GM12878 (cell line): ENCODE measurements at regions of chr7 and their contacts with region 1.

Region 1: DNA sequence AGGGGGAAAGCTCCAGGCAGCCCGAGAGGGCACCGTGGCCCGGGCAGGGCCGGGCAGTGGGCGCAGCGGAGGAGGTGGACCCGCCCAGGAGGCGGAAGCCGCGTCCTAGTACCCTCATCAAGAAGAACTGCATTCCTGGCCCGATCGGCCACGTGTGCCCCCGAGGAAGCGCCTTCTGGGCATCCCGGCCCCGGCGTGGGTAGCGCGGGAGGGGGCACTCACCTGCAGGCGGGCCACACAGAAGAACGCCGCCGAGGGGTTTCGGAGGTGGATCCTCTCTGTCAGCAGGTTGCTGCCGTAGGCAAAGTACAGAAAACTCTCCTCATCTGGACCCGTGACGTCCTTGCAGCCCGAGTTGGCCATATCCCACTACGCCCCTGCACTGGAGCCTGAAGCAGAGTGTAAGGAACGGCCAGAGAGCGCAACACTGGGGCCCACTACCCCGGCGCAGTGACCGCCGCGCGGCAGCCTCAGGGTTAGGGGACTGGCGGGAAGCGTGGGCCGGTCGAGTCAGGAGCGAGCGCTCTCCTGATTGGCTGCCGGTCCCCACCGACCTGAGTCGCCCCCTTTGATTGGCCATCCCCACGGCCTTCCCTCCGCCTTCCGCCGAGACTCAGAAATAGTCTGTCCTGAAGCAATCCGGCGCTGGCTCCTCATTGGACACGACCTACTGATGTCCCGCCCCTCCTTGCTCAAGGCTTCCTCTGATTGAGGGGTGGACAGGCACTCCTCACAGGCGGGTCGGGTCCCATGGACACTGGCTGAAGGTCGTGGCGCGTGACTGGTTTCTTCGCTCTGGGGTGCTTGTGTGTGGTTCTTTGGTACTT is at the start of gene GGCT:
- DNase-seq: peak; percentile 95
- ATAC-seq: peak; percentile 97
- H3K4me3 ChIP-seq: peak within 1 kb of the TSS; percentile 92
- H3K27ac ChIP-seq: peak within 1 kb of the TSS; percentile 82
- H3K4me1 ChIP-seq: peaks cover 6% of the 10 kb centered on the region; the same call in 1 of the 2 replicates
- H3K27me3 ChIP-seq: no peaks in the 10 kb centered on the region
- CTCF ChIP-seq: no peak
- EP300 ChIP-seq: no peak
- POLR2A ChIP-seq: peak; percentile 91
- RAD21 ChIP-seq: no peak
- polyA plus RNA-seq, gene GGCT: 168 to 215 TPM

Region 2: DNA sequence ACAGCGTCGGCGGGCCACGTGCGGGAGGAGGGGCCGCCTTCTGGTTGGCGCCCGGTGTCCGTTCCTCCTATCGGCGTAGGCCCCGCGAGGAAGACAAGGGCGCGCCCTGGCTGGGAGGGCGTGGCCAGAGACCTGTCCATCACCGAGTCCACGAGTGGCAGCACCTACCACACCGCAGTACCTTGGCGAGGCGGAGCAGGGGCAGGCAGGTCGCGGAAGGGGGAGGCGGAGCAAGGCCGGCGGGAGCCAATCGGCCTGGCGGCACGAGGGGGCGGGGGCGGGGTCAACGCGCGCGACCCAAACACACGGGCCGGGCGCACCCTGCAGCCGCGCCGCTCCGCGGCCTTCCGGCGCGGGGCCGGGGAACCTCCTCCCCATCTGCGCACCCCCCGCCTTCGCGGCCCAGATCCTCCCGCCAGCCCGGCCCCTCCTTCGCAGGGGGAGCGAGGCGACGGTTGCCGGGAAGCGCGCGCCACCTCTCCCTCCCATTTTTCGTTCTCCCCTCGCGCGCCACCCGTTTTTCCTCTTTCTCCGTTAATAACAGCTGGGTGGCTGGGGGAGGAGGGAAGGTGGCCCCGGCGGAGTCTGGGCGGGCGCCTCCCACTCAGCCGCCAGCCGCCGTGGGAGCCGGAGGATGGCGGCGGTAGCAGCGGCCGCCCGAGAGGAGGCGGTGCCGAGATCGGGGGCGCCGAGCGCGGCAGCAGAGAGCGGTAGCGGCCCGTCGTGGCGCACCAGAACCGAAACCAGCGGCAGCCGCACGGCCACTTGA is 220.1 kb before region 1 on chr7 and contains the start of gene ZNRF2:
- CTCF ChIA-PET with region 1: interaction called, 3 read pairs
- POLR2A ChIA-PET with region 1: no interaction called
- RAD21 ChIA-PET with region 1: no interaction called
- SMC1A ChIA-PET with region 1: no interaction called
- in situ Hi-C with region 1: no loop called
- intact Hi-C with region 1: loop called (anchors 2 kb)
- DNase-seq: peak; percentile 97
- ATAC-seq: peak; percentile 91
- H3K4me3 ChIP-seq: peak within 1 kb of the TSS; percentile 61; the same call in 1 of the 2 replicates
- H3K27ac ChIP-seq: peak within 1 kb of the TSS; percentile 83
- H3K4me1 ChIP-seq: peaks cover 12% of the 10 kb centered on the region
- H3K27me3 ChIP-seq: no peaks in the 10 kb centered on the region
- CTCF ChIP-seq: peak; percentile 21 to 63 (median 39); a peak in 4 of 6 replicates
- EP300 ChIP-seq: no peak
- POLR2A ChIP-seq: peak; percentile 84
- RAD21 ChIP-seq: peak; percentile 33; the same call in 1 of the 2 replicates
- polyA plus RNA-seq, gene ZNRF2: 3.1 to 4.0 TPM

Region 3: DNA sequence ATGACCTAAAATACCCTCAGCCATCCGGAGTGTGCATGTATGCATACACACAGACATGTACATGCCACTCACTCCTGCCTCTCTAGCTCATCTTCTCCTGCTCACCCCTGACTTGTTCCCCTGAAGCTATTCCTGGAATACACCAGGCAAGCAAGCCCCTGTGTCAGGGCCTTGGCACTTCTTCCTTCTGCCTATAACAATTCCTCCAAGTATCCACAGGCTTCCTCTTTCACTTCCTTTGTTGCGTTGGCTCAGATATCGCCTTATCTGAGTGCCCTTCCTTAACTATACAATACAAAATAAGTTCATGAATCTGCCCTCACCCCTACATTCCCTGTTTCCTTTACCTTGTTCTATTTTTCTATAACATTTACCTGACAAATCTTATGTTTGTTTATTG is 114.8 kb before region 1 on chr7:
- CTCF ChIA-PET with region 1: no interaction called
- POLR2A ChIA-PET with region 1: no interaction called
- RAD21 ChIA-PET with region 1: no interaction called
- SMC1A ChIA-PET with region 1: no interaction called
- in situ Hi-C with region 1: no loop called
- intact Hi-C with region 1: no loop called
- DNase-seq: no peak
- ATAC-seq: no peak
- H3K4me3 ChIP-seq: no peak overlapping the region
- H3K27ac ChIP-seq: no peak overlapping the region
- H3K4me1 ChIP-seq: no peaks in the 10 kb centered on the region
- H3K27me3 ChIP-seq: no peaks in the 10 kb centered on the region
- CTCF ChIP-seq: no peak
- EP300 ChIP-seq: no peak
- POLR2A ChIP-seq: no peak
- RAD21 ChIP-seq: no peak

Region 4: GRCh38 chr7:30459591-30460257 is 44.8 kb before region 1 on chr7:
- CTCF ChIA-PET with region 1: interaction called, 6 read pairs
- POLR2A ChIA-PET with region 1: interaction called, 4 read pairs
- RAD21 ChIA-PET with region 1: interaction called, 3 read pairs
- SMC1A ChIA-PET with region 1: interaction called, 6 read pairs
- in situ Hi-C with region 1: no loop called
- intact Hi-C with region 1: loop called (anchors 5 kb)
- DNase-seq: no peak
- ATAC-seq: no peak
- H3K4me3 ChIP-seq: no peak overlapping the region
- H3K27ac ChIP-seq: no peak overlapping the region
- H3K4me1 ChIP-seq: peaks cover 23% of the 10 kb centered on the region
- H3K27me3 ChIP-seq: no peaks in the 10 kb centered on the region
- CTCF ChIP-seq: no peak
- EP300 ChIP-seq: no peak
- POLR2A ChIP-seq: no peak
- RAD21 ChIP-seq: no peak

Region 5: GRCh38 chr7:30478349-30479201 is 26.0 kb before region 1 on chr7 and contains the start of gene NOD1:
- CTCF ChIA-PET with region 1: interaction called, 5 read pairs
- POLR2A ChIA-PET with region 1: interaction called, 12 read pairs
- RAD21 ChIA-PET with region 1: interaction called, 3 read pairs
- SMC1A ChIA-PET with region 1: interaction called, 8 read pairs
- in situ Hi-C with region 1: no loop called
- intact Hi-C with region 1: no loop called
- DNase-seq: no peak
- ATAC-seq: peak; percentile 93
- H3K4me3 ChIP-seq: peak within 1 kb of the TSS; percentile 96
- H3K27ac ChIP-seq: peak within 1 kb of the TSS; percentile 74
- H3K4me1 ChIP-seq: peaks cover 30% of the 10 kb centered on the region
- H3K27me3 ChIP-seq: no peaks in the 10 kb centered on the region
- CTCF ChIP-seq: 0 out of 6 replicates have a peak, but pooled peaks of 1 of the 3 experiments have one; percentile 1
- EP300 ChIP-seq: no peak
- POLR2A ChIP-seq: peak; percentile 92; the same call in 1 of the 2 replicates
- RAD21 ChIP-seq: no peak
- polyA plus RNA-seq, gene NOD1: 1.8 to 2.2 TPM

Region 6: DNA sequence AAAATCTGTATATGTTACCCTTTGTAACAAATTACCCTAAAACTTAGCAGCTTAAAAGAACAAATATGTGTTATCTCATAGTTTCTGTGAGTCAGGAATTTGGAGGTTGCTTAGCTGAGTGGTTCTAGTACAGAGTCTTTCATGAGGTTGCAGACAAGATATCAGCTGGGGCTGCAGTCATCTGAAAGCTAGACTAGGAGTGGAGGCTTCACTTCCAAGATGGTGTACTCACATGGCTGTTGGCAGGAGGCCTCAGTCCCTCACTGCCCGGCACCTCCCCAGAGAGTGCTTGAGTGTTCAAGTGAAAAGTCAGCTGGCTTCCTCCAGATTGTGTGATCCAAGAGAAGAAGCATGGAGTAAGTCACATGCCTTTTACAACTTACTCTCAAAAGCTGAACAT is 17.0 kb after region 1 on chr7:
- CTCF ChIA-PET with region 1: interaction called, 3 read pairs
- POLR2A ChIA-PET with region 1: interaction called, 10 read pairs
- RAD21 ChIA-PET with region 1: no interaction called
- SMC1A ChIA-PET with region 1: interaction called, 10 read pairs
- in situ Hi-C with region 1: no loop called
- intact Hi-C with region 1: no loop called
- DNase-seq: no peak
- ATAC-seq: no peak; the same call in 2 of the 3 replicates
- H3K4me3 ChIP-seq: no peak overlapping the region
- H3K27ac ChIP-seq: no peak overlapping the region
- H3K4me1 ChIP-seq: peaks cover 10% of the 10 kb centered on the region
- H3K27me3 ChIP-seq: no peaks in the 10 kb centered on the region
- CTCF ChIP-seq: no peak
- EP300 ChIP-seq: no peak
- POLR2A ChIP-seq: no peak
- RAD21 ChIP-seq: no peak